HAP-1 (cell line): ENCODE measurements at regions of chr15 and their contacts with region 1.

Region 1: GRCh38 chr15:92082006-92082843 is 228.7 kb downstream of the SLCO3A1 start:
- DNase-seq: peak; percentile 74 to 83
- H3K4me3 ChIP-seq: no peak overlapping the region
- H3K4me1 ChIP-seq: peaks cover 3% of the 10 kb centered on the region; the same call in 1 of the 2 replicates
- H3K27me3 ChIP-seq: no peaks in the 10 kb centered on the region

Region 2: GRCh38 chr15:91294795-91295194 is 787.4 kb before region 1 on chr15:
- in situ Hi-C with region 1: loop called (anchors 5 kb)
- DNase-seq: no peak
- H3K4me3 ChIP-seq: no peak overlapping the region
- H3K4me1 ChIP-seq: peaks cover 2% of the 10 kb centered on the region
- H3K27me3 ChIP-seq: peaks cover 36% of the 10 kb centered on the region